ENCODE measurements at regions of chr4 and their contacts with region 1.

Region 1: DNA sequence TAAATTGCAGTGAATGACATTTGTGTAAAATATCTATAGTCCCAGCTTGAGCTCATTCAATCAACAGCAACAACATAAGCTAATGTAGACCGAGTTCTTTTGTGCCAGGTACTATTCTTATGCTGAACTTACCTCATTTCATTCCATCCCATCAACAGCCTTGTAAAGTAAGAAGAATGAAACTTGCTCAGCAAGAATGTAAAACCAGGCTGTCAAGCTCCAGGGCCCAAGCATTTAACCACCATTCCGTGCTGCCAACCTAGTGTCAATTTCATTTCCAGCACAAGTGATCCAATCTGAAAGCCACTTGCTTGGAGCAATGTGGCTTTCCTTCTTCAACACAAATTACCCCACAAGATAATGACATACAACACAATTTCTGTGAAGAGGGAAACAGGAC is 36.6 kb downstream of the RASSF6 start:
- DNase-seq: no peak
- H3K4me3 ChIP-seq: peak overlapping the region in 1 of 4 experiments; percentile 34; a peak in 2 of 8 replicates
- H3K27ac ChIP-seq: no peak overlapping the region
- H3K4me1 ChIP-seq: peaks cover 0 to 11% (median 1%) of the 10 kb centered on the region in 4 experiments; a peak in 2 of 7 replicates
- H3K27me3 ChIP-seq: peaks cover 0 to 1% (median 0%) of the 10 kb centered on the region in 4 experiments; a peak in 1 of 7 replicates
- CTCF ChIP-seq: no peak
- EP300 ChIP-seq: no peak
- POLR2A ChIP-seq: no peak
- RAD21 ChIP-seq: no peak

Region 2: DNA sequence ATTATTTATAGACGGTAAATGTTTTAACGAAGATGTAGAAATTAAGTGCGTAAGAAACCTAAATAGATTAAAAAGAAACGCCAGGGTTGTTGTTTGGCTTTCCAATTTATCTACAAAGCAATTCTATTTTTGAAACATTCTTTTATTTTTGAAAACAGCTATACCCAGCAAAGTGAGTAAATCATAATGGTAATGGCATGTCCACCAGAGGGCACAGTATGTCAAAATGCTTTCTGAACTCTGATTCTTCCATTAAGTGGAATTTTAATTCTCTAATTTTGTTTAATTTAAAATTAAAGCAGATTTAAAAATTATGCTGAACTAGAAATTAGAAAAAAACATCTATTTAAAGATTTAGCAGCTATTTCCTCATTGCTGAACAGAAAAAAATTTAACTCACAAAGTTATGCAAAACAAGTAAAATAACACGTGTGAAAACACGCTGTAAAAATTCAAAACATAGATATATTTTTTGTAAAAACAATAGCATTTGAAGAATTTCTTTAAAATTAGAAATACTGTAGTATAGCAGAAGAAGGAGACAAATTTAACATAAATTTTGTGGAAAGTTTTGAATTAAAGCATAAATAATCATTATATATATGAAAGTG is 10.1 kb after region 1 on chr4:
- CTCF ChIA-PET with region 1: interaction called, 15 read pairs
- POLR2A ChIA-PET with region 1: no interaction called
- DNase-seq: no peak
- H3K4me3 ChIP-seq: no peak overlapping the region
- H3K27ac ChIP-seq: no peak overlapping the region
- H3K4me1 ChIP-seq: peaks cover 0 to 3% (median 0%) of the 10 kb centered on the region in 4 experiments; a peak in 1 of 7 replicates
- H3K27me3 ChIP-seq: no peaks in the 10 kb centered on the region
- CTCF ChIP-seq: peak in 2 of 3 experiments; percentile 21 to 35; a peak in 2 of 4 replicates
- EP300 ChIP-seq: no peak
- POLR2A ChIP-seq: no peak
- RAD21 ChIP-seq: peak; percentile 35 to 38

Measured in H1 (cell line).